GM10248 (cell line): ENCODE measurements at regions of chr3 and their contacts with region 1.

Region 1: DNA sequence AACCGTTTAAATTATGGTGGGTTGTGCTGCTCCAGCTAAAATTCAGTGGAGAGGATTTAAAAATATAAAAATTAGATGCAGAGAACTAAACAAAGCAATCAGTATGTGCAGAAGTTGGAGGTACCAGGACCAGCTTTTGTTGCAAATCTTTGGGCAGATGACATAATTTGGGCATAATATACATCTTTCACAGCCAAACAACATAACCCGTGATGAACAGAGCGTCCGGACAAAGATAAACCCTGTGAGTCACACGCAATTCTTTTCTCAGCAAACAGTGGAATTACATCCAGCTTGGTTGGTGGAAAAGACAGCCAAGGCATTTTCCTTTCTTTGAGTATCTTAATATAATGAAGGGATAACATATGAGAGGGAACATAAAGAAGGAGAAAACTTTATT is 419.4 kb upstream of the ADAMTS9 start:
- DNase-seq: no peak
- CTCF ChIP-seq: no peak

Region 2: DNA sequence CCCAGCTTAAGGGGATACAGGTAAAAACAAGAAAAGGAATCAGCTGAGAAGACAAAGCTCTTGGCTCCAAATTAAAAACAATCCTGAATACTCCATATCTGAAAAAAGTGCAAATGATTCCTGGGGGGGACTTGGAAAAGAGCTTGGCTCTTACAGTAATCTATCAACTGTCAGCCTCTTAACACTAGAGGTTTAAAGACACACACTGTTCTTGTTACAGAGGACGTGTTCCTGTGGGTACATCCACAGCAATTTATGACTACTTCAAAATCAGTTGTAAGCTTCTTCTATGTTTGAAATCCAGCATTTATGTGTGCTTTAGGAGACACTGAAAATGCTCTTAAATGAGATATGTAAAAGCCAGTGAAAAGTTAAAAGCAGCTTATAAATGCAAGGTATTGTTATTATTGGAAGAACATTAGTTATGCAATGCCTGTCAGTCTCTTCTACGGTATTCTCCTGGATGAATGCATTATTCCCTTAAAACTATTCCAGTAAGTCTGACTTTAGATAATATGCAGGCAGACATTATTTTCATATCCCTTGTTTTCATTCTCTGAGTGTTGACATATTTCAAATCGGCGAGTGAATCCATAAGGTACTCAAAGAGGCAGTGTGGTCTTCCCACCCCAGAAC is 10.9 kb before region 1 on chr3:
- CTCF ChIA-PET with region 1: interaction called, 12 read pairs
- POLR2A ChIA-PET with region 1: no interaction called
- DNase-seq: no peak
- CTCF ChIP-seq: no peak